ENCODE measurements at regions of chr21 and their contacts with region 1.

Region 1: DNA sequence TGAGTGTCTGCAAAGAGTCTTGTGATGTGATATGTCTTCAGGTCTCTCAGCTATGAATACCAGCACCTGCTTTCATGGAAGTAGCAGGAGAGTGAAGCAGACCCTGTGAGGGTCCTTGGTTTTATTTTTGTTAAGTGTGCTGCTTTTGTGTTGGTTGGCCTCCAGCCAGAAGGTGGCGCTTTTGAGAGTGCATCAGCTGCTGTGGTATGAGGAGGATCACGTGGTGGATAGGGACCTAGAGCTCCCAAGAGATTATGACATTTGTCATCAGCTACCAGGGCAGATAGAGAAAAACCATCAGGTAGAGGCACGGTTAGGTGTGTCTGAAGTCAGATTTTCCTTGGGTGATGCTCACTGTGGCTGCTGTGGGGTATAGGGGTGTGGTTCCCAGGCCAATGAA is 1232.1 kb downstream of the MRPL39 start:
- DNase-seq: no peak
- ATAC-seq: peak; percentile 49
- H3K4me3 Mint-ChIP-seq: no peak overlapping the region
- H3K27ac Mint-ChIP-seq: no peak overlapping the region
- H3K4me1 Mint-ChIP-seq: no peaks in the 10 kb centered on the region
- H3K27me3 Mint-ChIP-seq: no peaks in the 10 kb centered on the region
- CTCF ChIP-seq: no peak

Region 2: DNA sequence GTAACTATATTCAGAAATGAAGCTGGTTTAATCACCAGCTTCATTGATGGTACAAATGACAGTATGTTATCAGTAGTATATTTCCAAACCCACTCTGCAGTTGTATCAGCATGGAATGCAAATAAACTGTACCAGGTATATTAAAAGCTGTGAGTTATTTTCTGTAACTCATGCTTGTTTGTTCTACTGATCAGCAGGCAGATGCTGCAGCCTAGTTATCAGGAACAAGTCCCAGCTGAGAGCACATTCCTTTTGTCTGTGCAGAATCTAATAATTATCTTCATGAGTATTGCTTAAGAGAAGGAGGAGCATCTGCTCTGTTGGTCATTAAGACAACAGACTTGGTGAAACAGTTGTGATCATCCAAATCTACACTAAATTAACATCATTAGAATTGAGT is 99.0 kb before region 1 on chr21:
- CTCF ChIA-PET with region 1: no interaction called
- POLR2A ChIA-PET with region 1: no interaction called
- intact Hi-C with region 1: no loop called
- DNase-seq: no peak
- ATAC-seq: no peak
- H3K4me3 Mint-ChIP-seq: no peak overlapping the region
- H3K27ac Mint-ChIP-seq: no peak overlapping the region
- H3K4me1 Mint-ChIP-seq: peaks cover 4% of the 10 kb centered on the region
- H3K27me3 Mint-ChIP-seq: no peaks in the 10 kb centered on the region
- CTCF ChIP-seq: no peak

Region 3: GRCh38 chr21:24514081-24514733 is 139.0 kb after region 1 on chr21:
- CTCF ChIA-PET with region 1: interaction called, 5 read pairs
- POLR2A ChIA-PET with region 1: no interaction called
- intact Hi-C with region 1: loop called (anchors 2 kb)
- DNase-seq: no peak
- ATAC-seq: no peak
- H3K4me3 Mint-ChIP-seq: no peak overlapping the region
- H3K27ac Mint-ChIP-seq: no peak overlapping the region
- H3K4me1 Mint-ChIP-seq: no peaks in the 10 kb centered on the region
- H3K27me3 Mint-ChIP-seq: no peaks in the 10 kb centered on the region
- CTCF ChIP-seq: no peak

Region 4: DNA sequence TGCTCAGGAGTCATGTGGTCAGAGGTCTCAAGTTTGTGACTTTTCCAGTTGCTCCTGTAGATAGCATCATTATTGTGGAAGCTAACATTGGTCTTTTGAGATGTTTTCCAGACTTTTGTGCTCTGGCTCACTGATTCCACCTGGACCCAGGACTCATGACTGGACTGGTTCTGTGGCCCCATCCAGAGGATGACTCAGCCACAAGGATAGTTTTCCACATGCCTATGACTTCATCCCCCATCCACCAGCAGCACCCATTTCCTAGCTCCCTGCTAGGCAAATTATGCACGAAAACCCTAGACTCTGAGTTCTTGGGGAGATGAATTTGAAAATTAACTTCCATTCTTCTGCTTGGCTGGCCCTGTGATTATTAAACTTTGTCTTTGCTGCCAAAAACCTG is 282.8 kb after region 1 on chr21:
- CTCF ChIA-PET with region 1: no interaction called
- POLR2A ChIA-PET with region 1: no interaction called
- intact Hi-C with region 1: no loop called
- DNase-seq: no peak
- ATAC-seq: no peak
- H3K4me3 Mint-ChIP-seq: no peak overlapping the region
- H3K27ac Mint-ChIP-seq: no peak overlapping the region
- H3K4me1 Mint-ChIP-seq: no peaks in the 10 kb centered on the region
- H3K27me3 Mint-ChIP-seq: peaks cover 2% of the 10 kb centered on the region
- CTCF ChIP-seq: no peak

Region 5: DNA sequence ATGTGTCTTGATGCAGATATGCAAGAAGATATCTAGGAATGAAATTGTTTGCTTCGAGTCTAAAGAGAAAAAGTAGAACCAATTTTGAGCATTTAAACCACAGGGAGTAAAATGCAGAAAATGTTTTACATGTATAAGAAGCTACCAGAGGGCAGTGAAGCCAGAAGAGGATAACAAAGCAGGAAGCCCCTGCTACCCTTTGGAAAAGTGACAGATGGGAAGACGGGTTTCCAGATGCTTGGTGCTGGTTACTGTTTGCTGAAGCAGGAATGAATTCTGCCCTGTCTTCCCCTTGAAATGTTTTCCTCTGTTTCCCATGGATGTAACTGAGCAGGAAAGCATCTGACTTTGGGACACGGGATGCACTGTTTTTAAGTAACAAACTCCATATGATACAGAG is 409.8 kb after region 1 on chr21:
- CTCF ChIA-PET with region 1: no interaction called
- POLR2A ChIA-PET with region 1: no interaction called
- intact Hi-C with region 1: no loop called
- DNase-seq: no peak
- ATAC-seq: no peak
- H3K4me3 Mint-ChIP-seq: no peak overlapping the region
- H3K27ac Mint-ChIP-seq: no peak overlapping the region
- H3K4me1 Mint-ChIP-seq: no peaks in the 10 kb centered on the region
- H3K27me3 Mint-ChIP-seq: peaks cover 2% of the 10 kb centered on the region
- CTCF ChIP-seq: no peak

Measured in activated B cell treated with CpG ODN at 0.5 μM for 24 hours (primary cell).